ENCODE measurements at regions of chr11 and their contacts with region 1.

Region 1: GRCh38 chr11:30917859-30918478 is 331.8 kb upstream of the MPPED2 start:
- DNase-seq: peak; percentile 93
- H3K4me3 ChIP-seq: no peak overlapping the region
- H3K27ac ChIP-seq: no peak overlapping the region
- H3K4me1 ChIP-seq: no peaks in the 10 kb centered on the region
- H3K27me3 ChIP-seq: peaks cover 28% of the 10 kb centered on the region
- CTCF ChIP-seq: peak; percentile 99

Region 2: DNA sequence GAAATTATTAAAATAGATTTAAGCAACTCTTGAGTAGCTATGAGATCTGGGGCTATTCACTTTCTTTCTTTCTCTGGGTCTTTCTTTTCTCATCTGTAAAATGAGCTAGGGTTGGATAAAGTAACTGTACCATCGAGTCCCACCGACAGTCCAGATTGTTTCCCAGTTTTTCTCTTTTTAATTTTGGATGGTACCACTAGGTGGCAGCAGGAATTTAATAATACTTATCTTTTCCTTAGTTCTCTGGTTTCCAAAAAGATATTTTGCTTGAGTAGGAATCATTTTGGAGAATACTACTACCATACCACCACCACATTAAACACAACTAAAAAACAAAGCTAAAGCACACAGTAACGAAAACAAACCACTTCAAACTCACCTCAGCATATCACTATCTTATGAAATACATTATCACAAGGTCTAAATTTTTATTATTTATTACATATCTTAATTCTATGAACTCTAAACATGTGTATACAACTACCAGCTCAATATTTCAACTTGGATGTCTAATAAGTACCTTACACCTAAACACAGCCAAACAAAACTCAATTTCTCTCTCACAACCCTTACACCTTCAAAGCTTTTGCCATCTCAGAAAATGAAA is 1485.1 kb before region 1 on chr11:
- CTCF ChIA-PET with region 1: interaction called, 4 read pairs
- POLR2A ChIA-PET with region 1: no interaction called
- intact Hi-C with region 1: loop called (anchors 1 kb)
- DNase-seq: peak; percentile 81
- H3K4me3 ChIP-seq: no peak overlapping the region
- H3K27ac ChIP-seq: no peak overlapping the region
- H3K4me1 ChIP-seq: no peaks in the 10 kb centered on the region
- H3K27me3 ChIP-seq: peaks cover 10% of the 10 kb centered on the region
- CTCF ChIP-seq: peak; percentile 92

Region 3: GRCh38 chr11:30046582-30046952 is 871.4 kb before region 1 on chr11:
- CTCF ChIA-PET with region 1: no interaction called
- POLR2A ChIA-PET with region 1: no interaction called
- intact Hi-C with region 1: loop called (anchors 5 kb)
- DNase-seq: peak; percentile 54
- H3K4me3 ChIP-seq: no peak overlapping the region
- H3K27ac ChIP-seq: no peak overlapping the region
- H3K4me1 ChIP-seq: no peaks in the 10 kb centered on the region
- H3K27me3 ChIP-seq: no peaks in the 10 kb centered on the region
- CTCF ChIP-seq: peak; percentile 46

Region 4: GRCh38 chr11:30333405-30333804 is 584.6 kb before region 1 on chr11:
- CTCF ChIA-PET with region 1: interaction called, 10 read pairs
- POLR2A ChIA-PET with region 1: no interaction called
- intact Hi-C with region 1: no loop called
- DNase-seq: peak; percentile 52
- H3K4me3 ChIP-seq: no peak overlapping the region
- H3K27ac ChIP-seq: no peak overlapping the region
- H3K4me1 ChIP-seq: peaks cover 9% of the 10 kb centered on the region
- H3K27me3 ChIP-seq: no peaks in the 10 kb centered on the region
- CTCF ChIP-seq: peak; percentile 83

Region 5: GRCh38 chr11:30559004-30559403 is 359.0 kb before region 1 on chr11:
- CTCF ChIA-PET with region 1: interaction called, 17 read pairs
- POLR2A ChIA-PET with region 1: no interaction called
- intact Hi-C with region 1: no loop called
- DNase-seq: no peak
- H3K4me3 ChIP-seq: no peak overlapping the region
- H3K27ac ChIP-seq: no peak overlapping the region
- H3K4me1 ChIP-seq: peaks cover 2% of the 10 kb centered on the region
- H3K27me3 ChIP-seq: no peaks in the 10 kb centered on the region
- CTCF ChIP-seq: no peak

Region 6: GRCh38 chr11:30811226-30811755 is 106.7 kb before region 1 on chr11:
- CTCF ChIA-PET with region 1: no interaction called
- POLR2A ChIA-PET with region 1: no interaction called
- intact Hi-C with region 1: loop called (anchors 5 kb)
- DNase-seq: no peak
- H3K4me3 ChIP-seq: no peak overlapping the region
- H3K27ac ChIP-seq: no peak overlapping the region
- H3K4me1 ChIP-seq: peaks cover 42% of the 10 kb centered on the region
- H3K27me3 ChIP-seq: no peaks in the 10 kb centered on the region
- CTCF ChIP-seq: no peak

Region 7: DNA sequence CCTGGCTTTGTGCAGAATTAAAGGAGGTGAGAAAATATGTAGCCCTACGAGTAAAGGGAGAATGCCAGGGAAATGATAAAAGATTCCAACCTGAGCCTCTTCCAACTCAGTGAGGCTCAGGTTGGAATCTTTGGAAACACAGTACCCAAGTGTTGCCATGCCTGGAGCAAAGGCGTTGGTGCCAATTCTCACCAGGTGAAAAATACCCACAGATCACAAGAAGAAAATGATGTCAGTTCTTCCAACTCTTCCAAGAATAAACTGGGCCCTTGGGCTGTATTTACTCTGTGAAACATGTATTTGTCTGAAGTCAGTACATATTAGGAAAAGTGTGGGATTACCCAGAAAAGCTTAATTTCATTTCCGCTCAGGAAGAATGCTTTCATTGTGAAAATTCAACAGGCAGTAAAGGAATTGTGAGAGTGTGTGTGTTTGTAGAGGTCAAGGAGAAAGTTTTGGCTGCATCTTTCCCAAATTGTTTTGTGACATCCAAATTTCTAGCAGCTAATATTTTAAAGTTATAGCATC is 96.5 kb before region 1 on chr11:
- CTCF ChIA-PET with region 1: no interaction called
- POLR2A ChIA-PET with region 1: no interaction called
- intact Hi-C with region 1: no loop called
- DNase-seq: no peak
- H3K4me3 ChIP-seq: no peak overlapping the region
- H3K27ac ChIP-seq: no peak overlapping the region
- H3K4me1 ChIP-seq: no peaks in the 10 kb centered on the region
- H3K27me3 ChIP-seq: no peaks in the 10 kb centered on the region
- CTCF ChIP-seq: no peak

Region 8: GRCh38 chr11:31262761-31263160 is 344.8 kb after region 1 on chr11:
- CTCF ChIA-PET with region 1: no interaction called
- POLR2A ChIA-PET with region 1: no interaction called
- intact Hi-C with region 1: no loop called
- DNase-seq: no peak
- H3K4me3 ChIP-seq: no peak overlapping the region
- H3K27ac ChIP-seq: no peak overlapping the region
- H3K4me1 ChIP-seq: no peaks in the 10 kb centered on the region
- H3K27me3 ChIP-seq: peaks cover 15% of the 10 kb centered on the region
- CTCF ChIP-seq: no peak

Region 9: DNA sequence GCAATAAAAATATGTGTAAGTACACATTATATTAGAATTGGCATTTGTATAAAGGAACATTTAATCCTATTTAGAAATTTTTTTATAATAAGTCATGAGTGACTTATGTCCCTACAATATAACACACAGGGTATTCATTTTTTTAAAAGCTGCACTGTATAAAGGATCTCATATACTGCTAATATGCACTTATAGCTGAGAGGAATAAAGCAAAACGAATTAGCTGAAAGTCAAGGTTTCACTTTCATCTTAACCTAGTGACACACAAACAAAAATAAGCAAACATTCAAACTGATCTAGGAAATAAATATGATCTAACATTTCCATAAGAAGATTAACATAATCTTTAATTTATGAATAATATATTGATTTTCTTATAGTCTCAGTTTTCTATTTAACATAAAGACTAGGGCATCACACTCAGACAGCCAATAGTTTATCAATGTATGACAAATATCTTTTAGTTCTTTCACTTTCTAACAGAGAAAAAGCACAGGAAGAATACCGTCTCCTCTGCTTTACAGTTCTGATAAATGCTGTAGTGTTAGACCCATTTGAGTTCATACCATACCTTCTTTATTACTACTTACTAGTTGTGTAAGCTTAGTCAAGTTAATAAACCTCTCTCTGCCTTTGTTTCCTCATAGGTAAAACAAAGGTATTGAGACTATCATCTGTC is 408.6 kb after region 1 on chr11:
- CTCF ChIA-PET with region 1: no interaction called
- POLR2A ChIA-PET with region 1: no interaction called
- intact Hi-C with region 1: no loop called
- DNase-seq: no peak
- H3K4me3 ChIP-seq: no peak overlapping the region
- H3K27ac ChIP-seq: no peak overlapping the region
- H3K4me1 ChIP-seq: no peaks in the 10 kb centered on the region
- H3K27me3 ChIP-seq: no peaks in the 10 kb centered on the region
- CTCF ChIP-seq: no peak

Measured in A673 (cell line).